Activated B cell treated with CpG ODN at 0.5 μM for 24 hours (primary cell): ENCODE measurements at regions of chr10 and their contacts with region 1.

Region 1: GRCh38 chr10:26737730-26738129 is 40.2 kb downstream of the PDSS1 start:
- DNase-seq: no peak
- ATAC-seq: peak; percentile 84
- H3K4me3 Mint-ChIP-seq: peak overlapping the region; percentile 63
- H3K27ac Mint-ChIP-seq: peak overlapping the region; percentile 95
- H3K4me1 Mint-ChIP-seq: peaks cover 67% of the 10 kb centered on the region
- H3K27me3 Mint-ChIP-seq: no peaks in the 10 kb centered on the region
- CTCF ChIP-seq: no peak

Region 2: DNA sequence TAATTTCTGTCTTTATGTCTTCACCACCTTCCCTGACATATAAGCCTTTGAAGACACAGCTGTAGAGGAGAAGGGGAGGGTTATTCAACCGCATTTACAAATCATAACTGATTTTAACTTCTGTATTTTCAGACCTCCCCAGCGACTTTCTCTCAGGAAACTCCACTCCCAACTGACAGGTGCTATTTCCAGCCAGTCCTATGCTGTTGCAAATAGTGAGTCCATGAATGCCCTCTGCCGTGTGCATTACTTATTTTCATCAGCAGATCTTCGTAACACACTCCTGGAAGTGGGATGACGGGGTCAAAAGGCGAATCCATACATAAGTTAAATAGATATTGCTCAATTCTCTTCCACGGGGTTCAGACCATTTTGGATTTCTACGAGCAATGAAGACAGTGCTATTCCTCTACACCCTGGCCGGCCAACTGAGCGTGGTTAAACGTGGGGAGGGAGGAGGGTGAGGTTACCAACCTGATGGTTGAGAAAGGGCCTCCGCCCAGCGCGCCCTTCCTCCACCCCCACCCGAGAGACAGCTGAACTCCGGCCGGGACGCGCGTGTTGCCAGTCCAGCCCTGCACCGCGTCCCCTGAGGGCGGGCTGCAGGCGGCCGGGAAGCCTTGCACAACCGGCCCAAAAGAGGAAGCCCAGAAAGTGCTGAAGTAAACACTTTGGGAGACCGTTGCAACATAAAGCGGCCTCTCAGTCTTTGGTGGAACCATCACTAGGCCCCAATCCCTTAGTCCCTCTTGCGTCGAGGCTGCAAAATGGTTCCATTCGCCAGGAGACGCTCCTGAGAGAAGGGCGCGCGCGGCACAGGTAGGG is 299.9 kb before region 1 on chr10 and contains the start of gene APBB1IP:
- CTCF ChIA-PET with region 1: no interaction called
- POLR2A ChIA-PET with region 1: no interaction called
- intact Hi-C with region 1: loop called (anchors 5 kb)
- DNase-seq: peak; percentile 65
- ATAC-seq: peak; percentile 77
- H3K4me3 Mint-ChIP-seq: peak within 1 kb of the TSS; percentile 93
- H3K27ac Mint-ChIP-seq: peak within 1 kb of the TSS; percentile 96
- H3K4me1 Mint-ChIP-seq: peaks cover 52% of the 10 kb centered on the region
- H3K27me3 Mint-ChIP-seq: no peaks in the 10 kb centered on the region
- CTCF ChIP-seq: no peak
- total RNA-seq, gene APBB1IP: 79.1 and 85.5 TPM in 2 replicates

Region 3: DNA sequence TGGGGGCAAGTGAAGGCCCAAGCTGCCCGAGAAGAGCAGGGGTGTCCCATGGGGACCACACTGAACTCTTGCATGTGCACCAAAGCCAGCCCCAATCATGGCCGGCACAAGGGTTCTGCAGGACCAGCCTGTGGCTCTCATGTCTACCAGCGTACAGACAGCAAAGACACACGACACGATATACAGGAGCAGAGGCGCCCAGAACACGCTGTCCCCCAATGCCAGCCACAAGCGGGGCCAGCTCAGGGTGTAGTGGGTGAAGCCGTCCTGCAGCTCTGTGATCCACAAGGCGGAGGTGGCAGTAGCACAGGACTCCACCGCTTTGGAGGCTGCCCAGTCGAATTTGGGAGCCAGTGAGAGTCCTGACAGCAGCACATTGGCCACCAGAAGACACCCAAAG is 149.1 kb before region 1 on chr10:
- CTCF ChIA-PET with region 1: no interaction called
- POLR2A ChIA-PET with region 1: no interaction called
- intact Hi-C with region 1: no loop called
- DNase-seq: no peak
- ATAC-seq: no peak
- H3K4me3 Mint-ChIP-seq: no peak overlapping the region
- H3K27ac Mint-ChIP-seq: no peak overlapping the region
- H3K4me1 Mint-ChIP-seq: no peaks in the 10 kb centered on the region
- H3K27me3 Mint-ChIP-seq: no peaks in the 10 kb centered on the region
- CTCF ChIP-seq: no peak

Region 4: DNA sequence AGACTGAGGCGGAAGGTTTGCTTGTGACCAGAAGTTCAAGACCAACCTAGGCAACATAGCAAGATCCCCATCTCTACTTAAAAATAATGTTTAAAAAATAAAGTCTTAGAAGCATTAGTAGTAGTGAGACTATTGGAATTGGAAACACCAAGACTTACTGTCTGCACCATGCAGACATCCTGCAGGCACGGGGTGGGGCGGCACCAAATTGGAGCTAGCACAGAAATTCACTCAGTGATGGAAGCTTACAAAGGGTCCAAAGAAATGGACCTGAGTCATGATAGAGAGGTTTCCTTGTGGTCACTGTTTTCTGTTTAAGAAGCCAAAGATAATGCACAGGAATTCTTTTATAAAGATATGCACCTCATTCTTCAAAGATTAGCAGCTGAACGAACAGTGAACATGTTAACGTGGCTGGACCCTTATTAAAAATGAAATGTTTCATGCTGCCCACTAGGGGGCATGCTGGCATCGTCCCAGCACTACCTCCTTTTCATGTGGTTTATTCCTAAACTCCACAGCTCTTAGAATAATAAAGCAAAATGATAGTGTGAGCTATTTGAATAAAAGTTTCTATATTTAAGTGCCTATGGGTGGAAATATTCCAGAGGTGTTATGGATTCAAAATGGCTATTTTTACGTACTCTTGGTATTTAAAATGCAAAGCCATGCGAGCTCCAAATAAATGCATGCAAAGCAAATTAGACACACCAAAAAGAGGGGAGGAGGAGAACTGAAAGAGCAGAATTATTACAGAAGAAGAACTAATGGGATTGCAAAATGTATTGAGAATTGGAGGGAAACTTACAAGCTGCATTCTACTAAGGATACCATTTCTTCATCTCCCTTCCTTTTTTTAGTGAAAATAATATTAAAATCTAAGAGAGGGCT is 11.6 kb before region 1 on chr10:
- CTCF ChIA-PET with region 1: interaction called, 16 read pairs
- POLR2A ChIA-PET with region 1: interaction called, 7 read pairs
- intact Hi-C with region 1: loop called (anchors 1 kb)
- DNase-seq: no peak
- ATAC-seq: peak; percentile 80
- H3K4me3 Mint-ChIP-seq: no peak overlapping the region
- H3K27ac Mint-ChIP-seq: peak overlapping the region; percentile 4
- H3K4me1 Mint-ChIP-seq: peaks cover 17% of the 10 kb centered on the region
- H3K27me3 Mint-ChIP-seq: no peaks in the 10 kb centered on the region
- CTCF ChIP-seq: peak; percentile 45

Region 5: DNA sequence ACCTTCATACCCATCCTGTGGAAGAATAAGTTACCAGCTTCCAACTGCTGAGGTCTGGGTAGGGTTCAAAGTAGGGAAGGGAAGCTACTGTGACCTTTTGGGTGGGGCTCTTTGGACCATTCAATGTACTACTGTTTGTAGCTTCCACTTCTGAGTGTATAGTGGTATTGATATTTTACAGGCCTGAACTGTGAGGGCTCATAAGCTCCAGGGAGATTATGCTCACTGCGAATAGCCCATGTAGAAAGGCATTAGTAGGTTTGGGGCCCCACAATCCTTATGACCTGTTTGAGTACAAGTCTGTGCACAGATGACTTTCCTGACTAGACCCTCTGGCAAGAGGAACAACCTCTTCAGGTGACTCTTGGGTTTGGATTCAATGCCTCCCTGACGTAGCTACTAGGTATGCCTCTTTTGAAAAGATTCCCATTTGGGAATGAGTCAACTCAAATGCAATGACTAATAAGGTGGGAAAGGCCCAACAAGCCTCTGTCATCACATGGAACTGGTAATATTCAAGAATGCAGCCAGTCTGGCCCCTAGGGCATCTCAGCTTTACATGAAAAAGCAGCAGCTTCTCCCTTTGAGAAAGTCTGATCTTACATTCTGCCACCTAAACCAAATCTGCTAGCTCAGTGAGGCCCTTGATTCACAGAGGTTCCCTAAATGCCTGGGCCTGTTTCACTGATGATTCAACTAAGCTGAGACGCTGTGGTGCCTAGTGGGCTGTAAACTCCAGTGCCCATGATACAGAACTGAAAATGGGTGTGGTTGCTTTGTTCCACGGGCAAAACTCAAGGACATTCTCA is 43.3 kb after region 1 on chr10:
- CTCF ChIA-PET with region 1: no interaction called
- POLR2A ChIA-PET with region 1: interaction called, 13 read pairs
- intact Hi-C with region 1: loop called (anchors 1 kb)
- DNase-seq: no peak
- ATAC-seq: peak; percentile 94
- H3K4me3 Mint-ChIP-seq: peak overlapping the region; percentile 72
- H3K27ac Mint-ChIP-seq: peak overlapping the region; percentile 88
- H3K4me1 Mint-ChIP-seq: peaks cover 86% of the 10 kb centered on the region
- H3K27me3 Mint-ChIP-seq: no peaks in the 10 kb centered on the region
- CTCF ChIP-seq: no peak

Region 6: GRCh38 chr10:27099916-27100812 is 362.4 kb after region 1 on chr10 and contains the start of gene ANKRD26:
- CTCF ChIA-PET with region 1: no interaction called
- POLR2A ChIA-PET with region 1: no interaction called
- intact Hi-C with region 1: loop called (anchors 5 kb)
- DNase-seq: peak; percentile 92
- ATAC-seq: peak; percentile 93
- H3K4me3 Mint-ChIP-seq: peak within 1 kb of the TSS; percentile 94
- H3K27ac Mint-ChIP-seq: peak within 1 kb of the TSS; percentile 96
- H3K4me1 Mint-ChIP-seq: peaks cover 18% of the 10 kb centered on the region
- H3K27me3 Mint-ChIP-seq: no peaks in the 10 kb centered on the region
- CTCF ChIP-seq: no peak
- total RNA-seq, gene ANKRD26: 6.0 and 7.7 TPM in 2 replicates

Region 7: DNA sequence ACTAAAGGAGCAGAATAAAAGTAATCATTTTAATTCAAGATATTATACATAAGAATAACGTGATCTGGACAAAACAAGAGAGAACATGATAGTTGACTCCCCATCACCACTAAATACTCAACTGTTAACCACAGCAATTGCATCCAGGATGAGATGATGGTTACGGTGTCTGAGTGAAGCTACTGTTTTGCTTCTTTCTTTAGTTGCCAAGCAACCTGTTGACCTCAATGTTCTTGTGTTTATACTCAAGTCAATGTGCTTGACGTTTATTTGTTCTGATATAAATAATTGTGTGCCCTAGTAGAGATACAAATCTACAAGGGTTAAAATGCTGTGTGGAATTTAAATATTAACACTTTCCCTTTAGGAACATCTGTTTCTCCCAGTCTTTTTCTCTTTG is 1596.6 kb after region 1 on chr10:
- CTCF ChIA-PET with region 1: no interaction called
- POLR2A ChIA-PET with region 1: no interaction called
- intact Hi-C with region 1: loop called (anchors 2 kb)
- DNase-seq: no peak
- ATAC-seq: peak; percentile 56
- H3K4me3 Mint-ChIP-seq: peak overlapping the region; percentile 79
- H3K27ac Mint-ChIP-seq: peak overlapping the region; percentile 97
- H3K4me1 Mint-ChIP-seq: peaks cover 46% of the 10 kb centered on the region
- H3K27me3 Mint-ChIP-seq: no peaks in the 10 kb centered on the region
- CTCF ChIP-seq: no peak